Activated CD4-positive, alpha-beta T cell treated with anti-CD3 and anti-CD28 coated beads, Interleukin-2, amount 10 ng/mL, durations not matched to agents 24 days and 14 days (primary cell): ENCODE measurements at regions of chr3 and their contacts with region 1.

Region 1: GRCh38 chr3:172750368-172751174 is at the start of gene ECT2:
- DNase-seq: peak; percentile 99
- H3K4me3 Mint-ChIP-seq: peak within 1 kb of the TSS; percentile 88
- H3K27ac Mint-ChIP-seq: peak within 1 kb of the TSS; percentile 96
- H3K4me1 Mint-ChIP-seq: peaks cover 32% of the 10 kb centered on the region
- H3K27me3 Mint-ChIP-seq: peaks cover 6% of the 10 kb centered on the region
- total RNA-seq, gene ECT2: 36.2 and 40.4 TPM in 2 replicates

Region 2: GRCh38 chr3:170908235-170909116 is 1842.1 kb before region 1 on chr3 and contains the start of gene EIF5A2:
- intact Hi-C with region 1: loop called (anchors 2 kb)
- DNase-seq: peak; percentile 97
- H3K4me3 Mint-ChIP-seq: peak within 1 kb of the TSS; percentile 99
- H3K27ac Mint-ChIP-seq: peak within 1 kb of the TSS; percentile 95
- H3K4me1 Mint-ChIP-seq: peaks cover 19% of the 10 kb centered on the region
- H3K27me3 Mint-ChIP-seq: peaks cover 15% of the 10 kb centered on the region
- total RNA-seq, gene EIF5A2: 8.7 and 9.7 TPM in 2 replicates

Region 3: DNA sequence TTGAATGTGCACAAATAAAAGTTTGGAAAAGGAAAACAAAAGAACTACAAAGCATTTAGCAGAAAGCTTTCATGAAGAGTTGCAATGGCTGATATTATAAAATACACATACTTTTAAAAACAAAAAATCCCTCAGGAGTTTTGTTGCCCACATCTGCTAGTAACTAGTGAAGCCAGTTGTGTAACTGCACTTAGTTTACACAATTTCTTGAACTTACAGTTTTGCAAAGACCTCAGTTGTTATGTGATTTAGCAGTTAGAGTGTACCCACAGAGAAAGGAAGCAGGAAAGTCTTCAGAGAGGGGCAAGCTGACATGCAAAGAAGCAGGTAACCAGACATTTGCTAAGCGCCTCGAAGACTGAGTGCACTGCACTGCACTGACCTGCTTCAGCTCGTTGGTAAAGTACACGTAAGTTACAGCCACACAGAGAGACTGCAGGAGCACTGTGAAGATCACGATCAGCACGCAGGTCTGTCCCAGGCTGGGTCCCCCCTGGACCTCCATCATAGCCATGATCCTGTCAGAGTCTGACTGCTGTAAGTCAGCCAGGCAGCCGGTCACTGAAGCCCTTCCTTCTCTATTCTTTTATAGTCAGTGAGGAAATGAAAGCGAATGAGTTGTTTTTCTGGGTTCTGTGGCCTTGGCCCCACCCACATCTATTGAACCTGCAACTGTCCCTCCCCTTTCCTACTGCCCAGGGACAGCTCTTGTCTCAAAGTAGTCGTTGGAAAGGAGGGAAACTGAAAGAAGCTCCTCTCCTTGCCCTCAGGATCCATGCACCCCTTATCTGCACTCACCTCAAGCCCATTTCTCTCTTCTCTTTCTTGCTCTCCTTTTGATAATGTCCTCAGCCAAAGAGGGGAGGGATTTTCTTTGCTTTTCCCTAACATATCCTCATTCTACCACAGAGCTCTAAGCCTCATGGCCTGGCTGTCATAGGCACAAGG is 227.4 kb before region 1 on chr3 and contains the start of gene TNFSF10:
- intact Hi-C with region 1: loop called (anchors 2 kb)
- DNase-seq: peak; percentile 94
- H3K4me3 Mint-ChIP-seq: peak within 1 kb of the TSS; percentile 87
- H3K27ac Mint-ChIP-seq: peak within 1 kb of the TSS; percentile 94
- H3K4me1 Mint-ChIP-seq: peaks cover 43% of the 10 kb centered on the region
- H3K27me3 Mint-ChIP-seq: no peaks in the 10 kb centered on the region
- total RNA-seq, gene TNFSF10: 71.5 and 77.5 TPM in 2 replicates

Region 4: DNA sequence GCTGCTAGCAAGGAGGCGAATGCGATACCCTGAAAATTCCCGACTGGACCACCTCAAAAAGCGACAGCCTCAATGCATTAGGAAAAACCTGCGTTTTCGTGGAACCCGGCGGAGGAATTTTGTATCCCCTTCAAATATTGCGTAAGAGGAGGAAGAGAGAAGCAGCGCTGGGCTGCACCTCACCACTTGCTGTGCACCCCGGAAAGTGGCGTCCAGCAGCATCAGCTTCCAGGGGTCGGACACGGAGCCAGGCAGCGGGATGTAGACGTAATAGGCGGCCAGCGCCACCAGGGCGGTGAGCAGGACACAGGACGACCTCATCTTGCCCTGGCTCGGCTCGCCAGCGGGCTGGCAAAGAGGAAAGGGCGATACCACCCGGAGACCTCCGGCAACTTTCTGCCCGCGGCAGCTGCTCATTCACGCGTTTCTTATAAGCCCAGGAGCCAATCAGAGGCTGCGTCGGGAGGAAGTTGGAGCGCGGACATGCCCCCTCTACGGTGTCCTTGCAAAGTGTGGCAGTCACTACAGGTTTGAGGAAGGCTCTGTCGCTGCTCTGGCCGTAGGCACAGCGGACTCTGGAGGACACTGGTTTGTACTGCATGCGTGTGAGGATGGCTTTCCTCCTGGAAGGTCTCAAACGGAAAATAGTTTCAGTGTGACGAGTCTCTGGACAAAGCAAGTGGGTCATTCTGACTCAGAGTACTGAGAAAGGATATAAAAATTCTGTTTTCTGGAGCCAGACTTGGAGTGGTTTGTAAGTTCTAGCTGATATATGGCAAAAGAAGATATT is 39.7 kb before region 1 on chr3 and contains the start of gene NCEH1:
- intact Hi-C with region 1: loop called (anchors 1 kb)
- DNase-seq: peak; percentile 92
- H3K4me3 Mint-ChIP-seq: peak within 1 kb of the TSS; percentile 94
- H3K27ac Mint-ChIP-seq: peak within 1 kb of the TSS; percentile 61
- H3K4me1 Mint-ChIP-seq: peaks cover 19% of the 10 kb centered on the region
- H3K27me3 Mint-ChIP-seq: peaks cover 14% of the 10 kb centered on the region
- total RNA-seq, gene NCEH1: 4.9 and 7.7 TPM in 2 replicates

Region 5: GRCh38 chr3:172776049-172776717 is 25.6 kb after region 1 on chr3:
- intact Hi-C with region 1: no loop called
- DNase-seq: no peak
- H3K4me3 Mint-ChIP-seq: no peak overlapping the region
- H3K27ac Mint-ChIP-seq: no peak overlapping the region
- H3K4me1 Mint-ChIP-seq: peaks cover 10% of the 10 kb centered on the region
- H3K27me3 Mint-ChIP-seq: no peaks in the 10 kb centered on the region

Region 6: DNA sequence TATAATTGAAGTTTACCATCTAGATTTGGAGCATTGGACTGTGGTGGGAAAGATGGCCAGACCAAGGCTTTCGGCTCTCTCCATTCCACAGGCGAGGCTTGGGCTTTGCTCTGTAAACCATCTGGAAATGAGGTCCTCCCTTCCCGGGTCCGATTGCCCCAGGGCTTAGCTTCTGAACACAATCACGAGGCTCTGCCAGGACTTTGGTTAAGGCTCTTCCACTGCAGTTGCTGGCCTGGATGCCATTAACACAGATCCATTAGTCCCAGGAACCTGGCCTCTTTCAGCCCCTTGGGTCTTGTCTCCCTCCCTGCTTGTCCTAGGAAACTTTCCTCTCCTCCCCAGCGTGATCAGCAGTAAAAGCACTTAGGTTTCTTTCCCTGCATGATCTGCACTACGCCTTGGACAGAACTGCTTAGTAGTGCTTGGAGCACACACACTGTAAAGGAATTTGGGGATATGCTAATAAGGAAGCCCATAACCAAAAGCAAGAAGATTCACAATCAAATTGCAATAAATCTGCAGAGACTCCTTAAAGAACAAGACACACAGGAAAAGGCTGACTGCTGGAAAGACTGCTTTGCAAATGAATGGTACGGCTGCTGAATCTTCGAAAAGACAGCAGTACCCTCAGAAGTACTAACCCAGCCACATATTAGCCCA is 154.3 kb after region 1 on chr3:
- intact Hi-C with region 1: no loop called
- DNase-seq: no peak
- H3K4me3 Mint-ChIP-seq: no peak overlapping the region
- H3K27ac Mint-ChIP-seq: no peak overlapping the region
- H3K4me1 Mint-ChIP-seq: no peaks in the 10 kb centered on the region
- H3K27me3 Mint-ChIP-seq: no peaks in the 10 kb centered on the region